ENCODE measurements at regions of chr13 and their contacts with region 1.

Region 1: DNA sequence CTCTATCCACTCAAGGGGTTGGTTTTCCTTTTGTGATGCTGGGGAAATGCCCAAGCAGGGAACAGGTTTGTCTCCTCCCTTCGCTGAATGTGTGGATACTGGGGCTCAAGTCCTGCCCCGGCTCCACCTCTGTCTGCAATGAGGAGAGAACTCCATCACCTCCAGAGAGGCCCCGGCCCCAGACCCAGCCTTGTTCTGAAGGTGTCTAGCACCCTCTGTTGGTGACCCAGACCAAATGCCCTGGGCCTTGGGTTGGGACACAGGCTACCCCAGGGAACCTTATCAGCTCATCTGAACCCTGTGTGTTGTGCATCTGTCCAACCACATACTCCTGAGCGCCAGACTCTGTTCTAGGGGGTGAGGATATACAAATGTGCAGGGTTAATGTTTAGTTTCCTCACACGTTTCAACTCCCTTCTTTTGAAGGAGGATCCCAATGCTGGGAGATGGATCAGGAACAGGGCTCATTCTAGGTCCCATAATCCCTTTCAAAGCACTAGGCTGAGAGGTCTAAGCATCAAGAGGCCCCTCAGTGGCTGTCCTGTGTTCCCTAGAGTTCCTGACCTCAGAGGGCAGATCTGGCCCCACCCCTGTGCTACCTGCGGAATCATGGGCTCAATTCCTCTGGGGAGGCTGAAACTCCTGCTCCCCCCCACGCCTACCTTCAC is 112.5 kb upstream of the SLC7A1 start:
- DNase-seq: no peak
- ATAC-seq: peak; percentile 98
- H3K4me3 ChIP-seq: no peak overlapping the region
- H3K27ac ChIP-seq: no peak overlapping the region
- H3K4me1 ChIP-seq: no peaks in the 10 kb centered on the region
- H3K27me3 ChIP-seq: peaks cover 2% of the 10 kb centered on the region in 2 experiments
- CTCF ChIP-seq: peak; percentile 76 to 84 (median 78)
- EP300 ChIP-seq: no peak
- POLR2A ChIP-seq: no peak
- RAD21 ChIP-seq: peak; percentile 87

Region 2: GRCh38 chr13:29543230-29544215 is 164.5 kb before region 1 on chr13:
- CTCF ChIA-PET with region 1: interaction called, 8 read pairs
- POLR2A ChIA-PET with region 1: no interaction called
- RAD21 ChIA-PET with region 1: interaction called, 6 read pairs
- SMC1A ChIA-PET with region 1: no interaction called
- in situ Hi-C with region 1: no loop called
- intact Hi-C with region 1: loop called (anchors 1 kb)
- DNase-seq: peak; percentile 44
- ATAC-seq: peak; percentile 100
- H3K4me3 ChIP-seq: no peak overlapping the region
- H3K27ac ChIP-seq: peak overlapping the region; percentile 39
- H3K4me1 ChIP-seq: peaks cover 13% of the 10 kb centered on the region
- H3K27me3 ChIP-seq: no peaks in the 10 kb centered on the region
- CTCF ChIP-seq: peak; percentile 44 to 61 (median 47); a peak in 5 of 6 replicates
- EP300 ChIP-seq: no peak
- POLR2A ChIP-seq: no peak
- RAD21 ChIP-seq: peak; percentile 62

Measured in GM12878 (cell line).